ENCODE measurements at regions of chr5 and their contacts with region 1.

Region 1: DNA sequence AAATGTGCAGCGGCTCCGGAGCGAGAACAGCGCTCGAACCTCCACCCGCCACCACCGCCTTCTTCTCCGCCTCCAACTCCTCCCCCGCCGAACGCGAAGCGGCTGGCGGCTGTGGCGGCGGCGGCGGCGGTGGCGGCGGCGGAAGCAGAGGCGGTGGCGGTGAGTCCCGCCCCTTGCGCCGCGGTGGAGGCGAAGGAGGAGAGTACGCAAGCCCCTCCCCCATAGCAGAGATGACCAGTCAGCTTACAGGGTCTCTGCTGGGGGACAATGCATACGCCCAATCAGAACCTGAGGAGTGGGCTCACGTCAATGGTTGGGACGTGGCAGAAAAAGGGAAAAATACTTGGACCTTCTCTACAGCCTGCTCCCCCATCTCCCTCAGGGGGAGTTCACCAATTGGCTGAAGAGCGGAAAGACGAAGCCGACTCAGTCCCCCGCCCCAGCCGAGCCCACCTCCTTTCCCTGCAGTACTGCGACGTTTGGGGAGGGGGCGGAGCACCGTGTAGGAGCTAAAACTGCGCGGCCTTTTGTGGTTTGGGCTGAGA is at the start of gene PJA2:
- DNase-seq: peak; percentile 91 to 99 (median 96)
- ATAC-seq: peak; percentile 75
- H3K4me3 ChIP-seq: peak within 1 kb of the TSS; percentile 92
- H3K4me3 Mint-ChIP-seq: peak within 1 kb of the TSS; percentile 100
- H3K27ac ChIP-seq: peak within 1 kb of the TSS; percentile 98 to 99
- H3K27ac Mint-ChIP-seq: peak within 1 kb of the TSS; percentile 99
- H3K4me1 ChIP-seq: peaks cover 10% of the 10 kb centered on the region
- H3K4me1 Mint-ChIP-seq: peaks cover 52% of the 10 kb centered on the region
- H3K27me3 ChIP-seq: no peaks in the 10 kb centered on the region
- H3K27me3 Mint-ChIP-seq: no peaks in the 10 kb centered on the region
- CTCF ChIP-seq: no peak
- total RNA-seq, gene PJA2: 88.8 to 92.9 TPM

Region 2: GRCh38 chr5:108381954-108382783 is 1027.7 kb before region 1 on chr5 and contains the start of gene FBXL17:
- CTCF ChIA-PET with region 1: no interaction called
- POLR2A ChIA-PET with region 1: interaction called, 59 read pairs
- intact Hi-C with region 1: loop called (anchors 2 kb)
- DNase-seq: peak; percentile 83 to 97 (median 87)
- ATAC-seq: peak; percentile 76
- H3K4me3 ChIP-seq: peak within 1 kb of the TSS; percentile 63
- H3K4me3 Mint-ChIP-seq: peak within 1 kb of the TSS; percentile 90
- H3K27ac ChIP-seq: peak within 1 kb of the TSS; percentile 88 to 98
- H3K27ac Mint-ChIP-seq: peak within 1 kb of the TSS; percentile 94
- H3K4me1 ChIP-seq: peaks cover 13% of the 10 kb centered on the region
- H3K4me1 Mint-ChIP-seq: peaks cover 47% of the 10 kb centered on the region
- H3K27me3 ChIP-seq: no peaks in the 10 kb centered on the region
- H3K27me3 Mint-ChIP-seq: no peaks in the 10 kb centered on the region
- CTCF ChIP-seq: no peak
- total RNA-seq, gene FBXL17: 17.9 to 21.1 TPM

Region 3: GRCh38 chr5:108748401-108749127 is 661.4 kb before region 1 on chr5:
- CTCF ChIA-PET with region 1: interaction called, 3 read pairs
- POLR2A ChIA-PET with region 1: interaction called, 13 read pairs
- intact Hi-C with region 1: loop called (anchors 1 to 2 kb)
- DNase-seq: peak; percentile 92 to 99 (median 96)
- ATAC-seq: peak; percentile 91
- H3K4me3 ChIP-seq: peak overlapping the region; percentile 98
- H3K4me3 Mint-ChIP-seq: peak overlapping the region; percentile 96
- H3K27ac ChIP-seq: peak overlapping the region; percentile 91 to 92
- H3K27ac Mint-ChIP-seq: peak overlapping the region; percentile 91
- H3K4me1 ChIP-seq: peaks cover 18% of the 10 kb centered on the region
- H3K4me1 Mint-ChIP-seq: peaks cover 21% of the 10 kb centered on the region
- H3K27me3 ChIP-seq: peaks cover 0 to 5% of the 10 kb centered on the region in 2 experiments
- H3K27me3 Mint-ChIP-seq: peaks cover 4% of the 10 kb centered on the region
- CTCF ChIP-seq: no peak

Region 4: DNA sequence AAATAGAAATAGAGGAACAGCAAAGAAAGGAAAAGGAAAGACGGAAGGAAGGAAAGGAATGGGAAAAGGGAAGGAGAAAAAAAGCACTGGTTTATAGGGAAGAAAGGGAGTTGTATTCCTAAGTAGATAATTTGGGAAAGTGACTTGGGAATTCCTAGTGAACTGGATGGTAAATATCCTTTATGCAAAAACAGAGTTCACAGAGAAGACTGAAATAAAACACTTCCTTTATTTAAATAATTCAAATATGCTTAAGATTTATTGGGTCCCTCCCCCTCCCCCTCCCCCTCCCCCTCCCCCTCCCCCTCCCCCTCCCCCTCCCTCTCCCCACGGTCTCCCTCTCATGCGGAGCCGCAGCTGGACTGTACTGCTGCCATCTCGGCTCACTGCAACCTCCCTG is 69.6 kb before region 1 on chr5:
- CTCF ChIA-PET with region 1: no interaction called
- POLR2A ChIA-PET with region 1: no interaction called
- intact Hi-C with region 1: no loop called
- DNase-seq: no peak
- ATAC-seq: no peak
- H3K4me3 ChIP-seq: no peak overlapping the region
- H3K4me3 Mint-ChIP-seq: no peak overlapping the region
- H3K27ac ChIP-seq: no peak overlapping the region
- H3K27ac Mint-ChIP-seq: peak overlapping the region; percentile 42
- H3K4me1 ChIP-seq: no peaks in the 10 kb centered on the region
- H3K4me1 Mint-ChIP-seq: no peaks in the 10 kb centered on the region
- H3K27me3 ChIP-seq: no peaks in the 10 kb centered on the region
- H3K27me3 Mint-ChIP-seq: no peaks in the 10 kb centered on the region
- CTCF ChIP-seq: no peak

Region 5: DNA sequence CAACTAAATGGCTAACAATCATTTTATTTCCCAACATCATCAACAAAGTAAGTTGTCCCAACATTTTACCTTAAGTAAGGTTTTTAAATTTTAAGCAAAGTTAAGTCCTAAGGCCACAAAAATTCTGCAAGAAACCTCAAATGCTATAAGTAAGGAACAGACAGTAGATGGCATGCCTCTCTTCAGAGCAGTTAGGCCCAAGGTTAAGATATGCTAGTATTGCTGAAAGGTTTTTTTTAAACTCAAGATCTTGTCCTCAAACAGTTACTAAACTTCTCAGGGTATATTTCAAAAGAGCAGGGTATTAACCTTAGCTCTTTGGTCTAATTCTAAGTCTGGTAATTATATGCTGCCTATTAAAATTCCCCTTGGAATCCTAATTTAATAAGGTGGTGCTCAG is 35.3 kb before region 1 on chr5:
- CTCF ChIA-PET with region 1: interaction called, 3 read pairs
- POLR2A ChIA-PET with region 1: interaction called, 9 read pairs
- intact Hi-C with region 1: loop called (anchors 5 kb)
- DNase-seq: peak in 2 of 14 experiments; percentile 20 to 25
- ATAC-seq: peak; percentile 34
- H3K4me3 ChIP-seq: no peak overlapping the region
- H3K4me3 Mint-ChIP-seq: no peak overlapping the region
- H3K27ac ChIP-seq: no peak overlapping the region
- H3K27ac Mint-ChIP-seq: no peak overlapping the region
- H3K4me1 ChIP-seq: no peaks in the 10 kb centered on the region
- H3K4me1 Mint-ChIP-seq: peaks cover 58% of the 10 kb centered on the region
- H3K27me3 ChIP-seq: no peaks in the 10 kb centered on the region
- H3K27me3 Mint-ChIP-seq: no peaks in the 10 kb centered on the region
- CTCF ChIP-seq: no peak

Region 6: GRCh38 chr5:111092062-111092853 is 1682.3 kb after region 1 on chr5 and contains the start of gene WDR36:
- CTCF ChIA-PET with region 1: no interaction called
- POLR2A ChIA-PET with region 1: no interaction called
- intact Hi-C with region 1: loop called in 1 of 2 experiments (anchors 10 kb)
- DNase-seq: peak; percentile 78 to 93 (median 86)
- ATAC-seq: peak; percentile 93
- H3K4me3 ChIP-seq: peak within 1 kb of the TSS; percentile 89
- H3K4me3 Mint-ChIP-seq: peak within 1 kb of the TSS; percentile 90
- H3K27ac ChIP-seq: peak within 1 kb of the TSS; percentile 68 to 85
- H3K27ac Mint-ChIP-seq: peak within 1 kb of the TSS; percentile 94
- H3K4me1 ChIP-seq: peaks cover 9% of the 10 kb centered on the region
- H3K4me1 Mint-ChIP-seq: peaks cover 41% of the 10 kb centered on the region
- H3K27me3 ChIP-seq: no peaks in the 10 kb centered on the region
- H3K27me3 Mint-ChIP-seq: peaks cover 9% of the 10 kb centered on the region
- CTCF ChIP-seq: no peak
- total RNA-seq, gene WDR36: 22.0 to 22.4 TPM

Measured in CD4-positive, alpha-beta T cell (primary cell).